T-cell (primary cell): ENCODE measurements at regions of chr1 and their contacts with region 1.

Region 1: GRCh38 chr1:117512743-117513321 is 93.0 kb upstream of the TENT5C start:
- DNase-seq: peak in 1 of 35 experiments; percentile 54
- ATAC-seq: no peak
- H3K4me3 ChIP-seq: no peak overlapping the region
- H3K4me3 Mint-ChIP-seq: no peak overlapping the region
- H3K27ac ChIP-seq: no peak overlapping the region
- H3K27ac Mint-ChIP-seq: no peak overlapping the region
- H3K4me1 ChIP-seq: no peaks in the 10 kb centered on the region
- H3K4me1 Mint-ChIP-seq: no peaks in the 10 kb centered on the region
- H3K27me3 ChIP-seq: no peaks in the 10 kb centered on the region
- H3K27me3 Mint-ChIP-seq: no peaks in the 10 kb centered on the region

Region 2: DNA sequence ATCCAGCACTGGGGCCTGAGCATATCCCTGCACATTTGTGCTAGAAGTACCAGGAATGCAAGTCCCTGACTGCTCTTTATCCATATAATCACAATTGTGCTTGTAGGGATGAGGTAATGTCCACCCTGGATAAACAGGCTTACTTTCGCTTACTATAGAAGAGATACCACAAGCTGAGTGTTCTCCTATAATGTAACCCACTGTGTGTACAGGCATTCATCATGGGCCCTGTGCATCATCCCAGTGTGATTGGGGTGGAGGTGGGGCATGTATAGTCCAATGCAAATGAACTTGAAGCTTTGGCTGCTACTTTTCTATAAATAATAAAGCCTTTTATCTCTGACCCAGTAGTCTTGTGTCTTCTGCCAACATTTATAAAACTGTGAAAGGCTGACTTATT is 76.3 kb before region 1 on chr1:
- CTCF ChIA-PET with region 1: no interaction called
- POLR2A ChIA-PET with region 1: no interaction called
- DNase-seq: no peak
- ATAC-seq: no peak
- H3K4me3 ChIP-seq: no peak overlapping the region
- H3K4me3 Mint-ChIP-seq: no peak overlapping the region
- H3K27ac ChIP-seq: no peak overlapping the region
- H3K27ac Mint-ChIP-seq: no peak overlapping the region
- H3K4me1 ChIP-seq: no peaks in the 10 kb centered on the region
- H3K4me1 Mint-ChIP-seq: peaks cover 7 to 31% (median 28%) of the 10 kb centered on the region in 3 donors
- H3K27me3 ChIP-seq: no peaks in the 10 kb centered on the region
- H3K27me3 Mint-ChIP-seq: no peaks in the 10 kb centered on the region

Region 3: DNA sequence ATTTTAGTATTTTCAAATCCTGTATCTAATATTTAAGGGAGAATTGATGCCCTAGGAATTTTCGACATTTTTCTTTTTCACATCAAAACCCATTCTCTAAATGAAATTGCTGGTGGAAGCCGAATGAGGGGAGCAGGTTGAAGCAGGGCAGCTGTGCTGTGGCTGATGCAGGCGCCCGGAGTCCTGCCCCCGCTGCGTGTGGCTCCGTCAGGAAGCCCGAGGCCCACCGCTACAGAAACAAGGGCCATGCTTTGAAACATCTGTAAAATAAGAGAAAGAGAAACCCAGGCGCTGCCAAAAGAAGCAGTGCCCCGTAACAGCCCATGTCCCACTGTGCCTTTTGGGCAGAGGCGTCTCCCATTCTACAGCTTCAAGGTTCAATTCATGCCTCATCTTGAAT is 134.1 kb after region 1 on chr1:
- CTCF ChIA-PET with region 1: no interaction called
- POLR2A ChIA-PET with region 1: no interaction called
- DNase-seq: no peak
- ATAC-seq: no peak
- H3K4me3 ChIP-seq: no peak overlapping the region
- H3K4me3 Mint-ChIP-seq: no peak overlapping the region
- H3K27ac ChIP-seq: no peak overlapping the region
- H3K27ac Mint-ChIP-seq: no peak overlapping the region
- H3K4me1 ChIP-seq: peaks cover 3 to 41% of the 10 kb centered on the region in 2 experiments
- H3K4me1 Mint-ChIP-seq: peaks cover 18 to 48% (median 39%) of the 10 kb centered on the region in 3 donors
- H3K27me3 ChIP-seq: peaks cover 0 to 13% of the 10 kb centered on the region in 2 experiments
- H3K27me3 Mint-ChIP-seq: peaks cover 6 to 29% of the 10 kb centered on the region in 2 donors

Region 4: GRCh38 chr1:117758444-117759316 is 245.8 kb after region 1 on chr1:
- CTCF ChIA-PET with region 1: interaction called, 32 to 39 read pairs
- POLR2A ChIA-PET with region 1: interaction called in 1 of 2 experiments, 3 read pairs
- DNase-seq: peak; percentile 30 to 82 (median 52)
- ATAC-seq: peak; percentile 86 to 92 (median 88)
- H3K4me3 ChIP-seq: peak overlapping the region; percentile 5 to 49
- H3K4me3 Mint-ChIP-seq: peak overlapping the region; percentile 74 to 79 (median 75)
- H3K27ac ChIP-seq: no peak overlapping the region
- H3K27ac Mint-ChIP-seq: no peak overlapping the region
- H3K4me1 ChIP-seq: peaks cover 0 to 15% of the 10 kb centered on the region in 2 experiments
- H3K4me1 Mint-ChIP-seq: peaks cover 9 to 11% (median 11%) of the 10 kb centered on the region in 3 donors
- H3K27me3 ChIP-seq: peaks cover 2 to 17% of the 10 kb centered on the region in 2 experiments
- H3K27me3 Mint-ChIP-seq: peaks cover 8 to 19% of the 10 kb centered on the region in 2 donors

Region 5: DNA sequence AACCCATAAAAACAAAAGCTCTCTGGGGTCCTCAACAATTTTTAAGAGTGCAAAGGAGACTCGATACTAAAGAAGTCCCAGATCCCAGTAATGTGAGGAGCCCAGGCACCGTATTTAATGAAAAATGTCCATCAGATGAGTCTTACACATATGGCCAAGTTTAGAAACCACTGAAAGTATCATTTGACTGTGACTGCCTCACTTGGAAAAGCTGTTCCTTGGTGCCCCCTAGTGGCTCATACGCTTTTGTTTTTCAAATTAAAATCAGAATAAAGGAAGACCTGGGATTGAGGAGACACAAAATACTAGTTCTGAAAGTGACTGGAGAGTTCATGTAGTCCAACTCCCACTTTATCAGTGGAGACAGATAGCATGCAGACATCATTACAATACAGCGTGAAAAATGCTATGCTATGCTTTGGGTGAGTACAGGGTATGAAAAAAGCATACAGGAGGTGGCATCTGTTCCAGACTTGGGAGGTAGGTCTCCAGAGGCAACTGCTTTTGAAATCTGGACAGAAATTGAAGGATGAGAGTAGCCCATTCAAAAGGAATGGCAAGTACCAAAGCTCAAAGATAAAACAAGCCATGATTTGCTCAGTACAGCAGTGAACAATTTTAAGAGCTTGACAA is 382.8 kb after region 1 on chr1:
- CTCF ChIA-PET with region 1: interaction called, 3 to 18 read pairs
- POLR2A ChIA-PET with region 1: interaction called in 1 of 2 experiments, 3 read pairs
- DNase-seq: peak in 31 of 35 experiments; percentile 7 to 72 (median 44)
- ATAC-seq: peak in 1 of 4 experiments; percentile 48
- H3K4me3 ChIP-seq: no peak overlapping the region
- H3K4me3 Mint-ChIP-seq: no peak overlapping the region
- H3K27ac ChIP-seq: no peak overlapping the region
- H3K27ac Mint-ChIP-seq: no peak overlapping the region
- H3K4me1 ChIP-seq: no peaks in the 10 kb centered on the region
- H3K4me1 Mint-ChIP-seq: peaks cover 2 to 5% (median 2%) of the 10 kb centered on the region in 3 donors
- H3K27me3 ChIP-seq: no peaks in the 10 kb centered on the region
- H3K27me3 Mint-ChIP-seq: no peaks in the 10 kb centered on the region